A549 (cell line): ENCODE measurements at regions of chr19 and their contacts with region 1.

Region 1: GRCh38 chr19:49443366-49444099 is 2.2 kb upstream of the SLC17A7 start:
- DNase-seq: peak; percentile 94 to 97
- ATAC-seq: peak; percentile 72 to 85
- H3K4me3 ChIP-seq: peak overlapping the region; percentile 79
- H3K27ac ChIP-seq: peak overlapping the region; percentile 85 to 89
- H3K4me1 ChIP-seq: peaks cover 19% of the 10 kb centered on the region
- CTCF ChIP-seq: peak; percentile 97
- EP300 ChIP-seq: no peak
- POLR2A ChIP-seq: peak; percentile 21; the same call in 1 of the 2 replicates
- RAD21 ChIP-seq: peak; percentile 64 to 82

Region 2: DNA sequence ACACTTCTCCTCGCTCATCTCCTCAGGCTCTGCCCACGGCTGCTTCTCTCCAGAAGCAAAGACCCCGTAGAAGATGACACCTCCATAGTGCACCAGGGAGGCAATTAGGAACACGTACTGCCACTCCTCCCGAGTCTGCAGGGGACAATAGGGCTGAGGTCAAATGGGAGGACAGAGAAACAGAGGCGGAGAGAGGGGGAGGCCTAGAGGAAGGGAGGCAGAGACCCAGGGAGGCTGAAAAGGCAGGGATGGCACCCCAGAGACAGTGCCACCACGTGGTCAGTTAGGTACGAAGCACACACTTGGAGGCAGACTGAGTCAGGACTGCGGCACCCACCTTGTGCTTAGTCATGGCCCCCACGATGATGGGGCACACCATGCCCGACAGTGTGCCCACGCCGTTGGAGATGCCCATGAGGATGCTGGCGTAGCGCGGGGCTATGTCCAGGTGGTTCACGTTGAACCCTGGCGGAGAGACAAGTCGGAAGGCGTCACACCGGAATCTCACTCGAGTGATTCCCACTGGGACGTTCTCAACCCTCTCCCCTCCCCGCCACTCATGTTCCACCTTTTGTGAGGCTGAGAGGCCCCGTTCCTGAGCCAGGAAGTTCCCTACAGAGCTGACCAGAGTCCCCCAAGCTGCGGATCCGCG is 12.7 kb before region 1 on chr19:
- CTCF ChIA-PET with region 1: interaction called, 13 read pairs
- POLR2A ChIA-PET with region 1: interaction called, 6 read pairs
- DNase-seq: peak in 1 of 2 experiments; percentile 68
- ATAC-seq: peak in 1 of 2 experiments; percentile 43; a peak in 3 of 6 replicates
- H3K4me3 ChIP-seq: no peak overlapping the region
- H3K27ac ChIP-seq: no peak overlapping the region
- H3K4me1 ChIP-seq: peaks cover 20% of the 10 kb centered on the region
- CTCF ChIP-seq: peak; percentile 46
- EP300 ChIP-seq: no peak
- POLR2A ChIP-seq: no peak
- RAD21 ChIP-seq: peak; percentile 12 to 27; a peak in 2 of 5 replicates

Region 3: GRCh38 chr19:49486710-49487276 is 43.3 kb after region 1 on chr19:
- CTCF ChIA-PET with region 1: no interaction called
- POLR2A ChIA-PET with region 1: no interaction called
- DNase-seq: no peak
- ATAC-seq: no peak
- H3K4me3 ChIP-seq: peak overlapping the region; percentile 23
- H3K27ac ChIP-seq: peak overlapping the region; percentile 83 to 87
- H3K4me1 ChIP-seq: peaks cover 27% of the 10 kb centered on the region
- CTCF ChIP-seq: no peak
- EP300 ChIP-seq: no peak
- POLR2A ChIP-seq: no peak
- RAD21 ChIP-seq: no peak